Pancreas (tissue), 10 donors: ENCODE measurements at regions of chr4 and their contacts with region 1.

Region 1: DNA sequence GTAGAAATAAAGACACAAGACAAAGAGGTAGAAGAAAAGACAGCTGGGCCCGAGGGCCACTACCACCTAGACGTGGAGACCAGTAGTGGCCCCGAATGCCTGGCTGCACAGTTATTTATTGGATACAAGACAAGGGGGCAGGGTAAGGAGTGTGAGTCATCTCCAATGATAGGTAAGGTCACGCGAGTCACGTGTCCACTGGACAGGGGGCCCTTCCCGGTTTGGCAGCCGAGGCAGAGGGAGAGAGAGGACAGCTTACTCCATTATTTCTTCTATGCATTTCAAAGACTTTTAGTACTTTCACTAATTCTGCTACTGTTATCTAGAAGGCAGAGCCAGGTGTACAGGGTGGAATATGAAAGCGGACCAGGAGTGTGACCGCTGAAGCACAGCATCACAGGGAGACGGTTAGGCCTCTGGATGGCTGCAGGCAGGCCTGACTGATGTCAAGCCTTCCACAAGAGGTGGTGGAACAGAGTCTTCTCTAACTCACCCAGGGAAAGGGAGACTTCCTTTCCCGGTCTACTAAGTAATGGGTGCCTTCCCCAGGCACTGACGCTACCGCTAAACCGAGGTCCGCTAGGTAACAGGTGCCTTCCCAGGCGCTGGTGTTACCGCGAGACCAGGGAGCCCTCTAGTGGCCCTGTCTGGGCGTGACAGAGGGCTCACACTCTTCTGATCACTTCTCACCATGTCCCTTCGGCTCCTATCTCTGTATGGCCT is 44.9 kb downstream of the ZBTB49 start:
- DNase-seq: peak; percentile 44 to 85 (median 76)
- ATAC-seq: peak; percentile 68 to 95 (median 88)
- H3K4me3 ChIP-seq: no peak overlapping the region
- H3K27ac ChIP-seq: no peak overlapping the region
- H3K4me1 ChIP-seq: no peaks in the 10 kb centered on the region
- H3K27me3 ChIP-seq: no peaks in the 10 kb centered on the region
- CTCF ChIP-seq: peak; percentile 45 to 80 (median 74)

Region 2: GRCh38 chr4:4254666-4255065 is 80.3 kb before region 1 on chr4:
- intact Hi-C with region 1: loop called in 1 of 3 experiments (anchors 5 kb)
- DNase-seq: no peak
- ATAC-seq: no peak
- H3K4me3 ChIP-seq: no peak overlapping the region
- H3K27ac ChIP-seq: no peak overlapping the region
- H3K4me1 ChIP-seq: no peaks in the 10 kb centered on the region
- H3K27me3 ChIP-seq: peaks cover 0 to 6% (median 0%) of the 10 kb centered on the region in 4 donors
- CTCF ChIP-seq: no peak

Region 3: DNA sequence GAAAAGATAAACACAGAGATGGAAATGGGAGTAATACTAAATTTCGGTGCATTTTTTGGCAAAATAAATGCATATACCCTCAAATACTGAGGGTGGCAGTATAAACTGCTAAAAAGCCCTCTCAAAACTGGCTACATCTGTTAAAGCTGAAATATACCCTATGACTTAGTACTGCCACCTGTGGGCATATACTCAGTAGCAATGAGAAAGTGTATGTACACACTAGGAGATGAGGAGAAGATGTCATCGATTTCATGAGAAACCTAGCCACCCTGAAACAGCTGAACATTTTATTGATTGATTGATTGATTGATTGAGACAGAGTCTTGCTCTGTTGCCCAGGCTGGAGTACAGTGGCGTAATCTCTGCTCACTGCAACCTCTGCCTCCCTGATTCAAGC is 74.7 kb before region 1 on chr4:
- intact Hi-C with region 1: loop called in 1 of 3 experiments (anchors 5 kb)
- DNase-seq: no peak
- ATAC-seq: peak in 3 of 4 donors; percentile 55 to 70 (median 67)
- H3K4me3 ChIP-seq: no peak overlapping the region
- H3K27ac ChIP-seq: no peak overlapping the region
- H3K4me1 ChIP-seq: no peaks in the 10 kb centered on the region
- H3K27me3 ChIP-seq: no peaks in the 10 kb centered on the region
- CTCF ChIP-seq: no peak